GM12878 (cell line): ENCODE measurements at regions of chr5 and their contacts with region 1.

Region 1: DNA sequence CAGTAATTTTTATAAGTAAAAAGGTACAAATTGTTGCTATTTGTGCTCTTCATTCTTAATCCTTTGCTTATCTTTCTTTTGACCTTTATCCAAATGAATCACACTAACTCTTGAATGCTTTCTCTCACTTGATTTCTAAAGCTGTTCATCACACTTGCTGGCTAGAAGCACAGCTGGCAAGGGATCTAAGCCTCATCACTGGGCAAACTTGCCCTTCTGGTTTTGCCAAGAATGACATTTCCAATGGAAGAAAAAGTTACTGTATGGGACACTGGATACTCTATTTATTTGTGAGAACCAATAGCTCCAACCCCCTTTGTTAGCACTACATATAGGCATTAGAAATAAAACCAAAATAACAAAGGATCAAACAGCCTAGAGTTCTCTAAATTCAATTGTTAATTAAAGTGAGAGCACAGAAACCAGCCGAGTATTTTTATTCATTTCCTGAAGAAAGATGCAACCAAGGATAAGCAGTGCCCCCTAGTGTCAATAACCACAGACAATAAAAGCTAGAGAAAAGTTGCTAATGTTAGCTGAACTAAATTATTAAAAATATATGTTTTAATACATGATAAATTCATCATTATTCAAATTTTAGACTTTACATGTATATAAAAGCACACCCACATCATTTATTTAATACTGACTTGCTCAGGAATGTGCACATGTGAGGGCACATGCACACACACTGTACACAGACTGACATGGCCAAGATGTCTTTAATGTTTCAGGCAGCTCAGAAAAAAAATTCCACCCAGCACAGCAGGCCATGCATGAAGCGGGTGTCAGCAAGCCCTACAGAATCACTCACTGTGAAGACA is 59.8 kb upstream of the POU5F2 start:
- DNase-seq: peak; percentile 2
- ATAC-seq: peak; percentile 78
- H3K4me3 ChIP-seq: no peak overlapping the region
- H3K27ac ChIP-seq: no peak overlapping the region
- H3K4me1 ChIP-seq: peaks cover 3% of the 10 kb centered on the region; the same call in 1 of the 2 replicates
- H3K27me3 ChIP-seq: no peaks in the 10 kb centered on the region
- CTCF ChIP-seq: peak; percentile 49 to 68 (median 57)
- EP300 ChIP-seq: no peak
- POLR2A ChIP-seq: no peak
- RAD21 ChIP-seq: peak; percentile 91

Region 2: GRCh38 chr5:93582677-93583438 is 218.3 kb before region 1 on chr5 and contains the start of gene NR2F1:
- CTCF ChIA-PET with region 1: interaction called, 40 read pairs
- POLR2A ChIA-PET with region 1: no interaction called
- RAD21 ChIA-PET with region 1: interaction called, 16 read pairs
- SMC1A ChIA-PET with region 1: interaction called, 26 read pairs
- in situ Hi-C with region 1: no loop called
- intact Hi-C with region 1: loop called (anchors 1 kb)
- DNase-seq: no peak
- ATAC-seq: peak; percentile 54
- H3K4me3 ChIP-seq: peak within 1 kb of the TSS; percentile 16; the same call in 1 of the 2 replicates
- H3K27ac ChIP-seq: no peak within 1 kb of the TSS
- H3K4me1 ChIP-seq: peaks cover 18% of the 10 kb centered on the region
- H3K27me3 ChIP-seq: peaks cover 14 to 45% of the 10 kb centered on the region in 2 experiments
- CTCF ChIP-seq: no peak
- EP300 ChIP-seq: no peak
- POLR2A ChIP-seq: no peak
- RAD21 ChIP-seq: no peak
- polyA plus RNA-seq, gene NR2F1: 0.04 TPM in 1 of 2 experiments, not detected in the other

Region 3: GRCh38 chr5:93607367-93608258 is 193.6 kb before region 1 on chr5:
- CTCF ChIA-PET with region 1: interaction called, 95 read pairs
- POLR2A ChIA-PET with region 1: no interaction called
- RAD21 ChIA-PET with region 1: interaction called, 41 read pairs
- SMC1A ChIA-PET with region 1: interaction called, 55 read pairs
- in situ Hi-C with region 1: no loop called
- intact Hi-C with region 1: loop called (anchors 1 kb)
- DNase-seq: no peak
- ATAC-seq: peak; percentile 93
- H3K4me3 ChIP-seq: no peak overlapping the region
- H3K27ac ChIP-seq: no peak overlapping the region
- H3K4me1 ChIP-seq: 0 out of 2 replicates have a peak, but pooled peaks cover 3% of the 10 kb centered on the region
- H3K27me3 ChIP-seq: peaks cover 3 to 39% of the 10 kb centered on the region in 2 experiments
- CTCF ChIP-seq: peak; percentile 54 to 70 (median 69)
- EP300 ChIP-seq: no peak
- POLR2A ChIP-seq: no peak
- RAD21 ChIP-seq: peak; percentile 83

Region 4: GRCh38 chr5:93691997-93692396 is 109.2 kb before region 1 on chr5:
- CTCF ChIA-PET with region 1: no interaction called
- POLR2A ChIA-PET with region 1: no interaction called
- RAD21 ChIA-PET with region 1: no interaction called
- SMC1A ChIA-PET with region 1: no interaction called
- in situ Hi-C with region 1: no loop called
- intact Hi-C with region 1: no loop called
- DNase-seq: no peak
- ATAC-seq: no peak
- H3K4me3 ChIP-seq: no peak overlapping the region
- H3K27ac ChIP-seq: no peak overlapping the region
- H3K4me1 ChIP-seq: no peaks in the 10 kb centered on the region
- H3K27me3 ChIP-seq: no peaks in the 10 kb centered on the region
- CTCF ChIP-seq: no peak
- EP300 ChIP-seq: no peak
- POLR2A ChIP-seq: no peak
- RAD21 ChIP-seq: no peak

Region 5: DNA sequence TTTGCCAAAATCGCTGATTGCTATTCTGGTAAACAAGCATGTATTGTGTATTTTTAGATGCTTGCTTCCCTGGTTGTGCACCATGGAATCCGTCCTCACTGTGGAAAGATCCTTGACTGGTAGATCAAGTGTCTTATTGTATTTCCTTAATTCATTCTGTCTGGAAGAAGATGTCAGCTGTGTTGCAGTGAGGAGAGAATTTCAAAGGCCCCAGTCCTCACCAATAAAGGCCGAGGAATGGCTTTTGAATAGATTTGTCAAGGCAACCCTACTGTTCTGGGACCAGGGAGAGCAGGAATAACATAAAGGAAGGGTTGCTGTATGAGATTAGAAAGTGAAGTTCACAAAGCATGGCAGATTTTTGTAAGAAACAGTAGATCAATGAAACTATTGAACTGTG is 23.6 kb before region 1 on chr5:
- CTCF ChIA-PET with region 1: interaction called, 15 read pairs
- POLR2A ChIA-PET with region 1: no interaction called
- RAD21 ChIA-PET with region 1: interaction called, 6 read pairs
- SMC1A ChIA-PET with region 1: interaction called, 10 read pairs
- in situ Hi-C with region 1: no loop called
- intact Hi-C with region 1: no loop called
- DNase-seq: no peak
- ATAC-seq: no peak
- H3K4me3 ChIP-seq: no peak overlapping the region
- H3K27ac ChIP-seq: no peak overlapping the region
- H3K4me1 ChIP-seq: no peaks in the 10 kb centered on the region
- H3K27me3 ChIP-seq: no peaks in the 10 kb centered on the region
- CTCF ChIP-seq: no peak
- EP300 ChIP-seq: no peak
- POLR2A ChIP-seq: no peak
- RAD21 ChIP-seq: no peak

Region 6: GRCh38 chr5:93789173-93790070 is 11.8 kb before region 1 on chr5:
- CTCF ChIA-PET with region 1: interaction called, 24 read pairs
- POLR2A ChIA-PET with region 1: no interaction called
- RAD21 ChIA-PET with region 1: interaction called, 5 read pairs
- SMC1A ChIA-PET with region 1: interaction called, 9 read pairs
- in situ Hi-C with region 1: no loop called
- intact Hi-C with region 1: no loop called
- DNase-seq: no peak
- ATAC-seq: no peak
- H3K4me3 ChIP-seq: no peak overlapping the region
- H3K27ac ChIP-seq: no peak overlapping the region
- H3K4me1 ChIP-seq: no peaks in the 10 kb centered on the region
- H3K27me3 ChIP-seq: no peaks in the 10 kb centered on the region
- CTCF ChIP-seq: no peak
- EP300 ChIP-seq: no peak
- POLR2A ChIP-seq: no peak
- RAD21 ChIP-seq: no peak

Region 7: GRCh38 chr5:93899026-93899600 is 97.9 kb after region 1 on chr5:
- CTCF ChIA-PET with region 1: interaction called, 8 read pairs
- POLR2A ChIA-PET with region 1: no interaction called
- RAD21 ChIA-PET with region 1: interaction called, 4 read pairs
- SMC1A ChIA-PET with region 1: interaction called, 10 read pairs
- in situ Hi-C with region 1: no loop called
- intact Hi-C with region 1: no loop called
- DNase-seq: no peak
- ATAC-seq: peak; percentile 81
- H3K4me3 ChIP-seq: no peak overlapping the region
- H3K27ac ChIP-seq: no peak overlapping the region
- H3K4me1 ChIP-seq: no peaks in the 10 kb centered on the region
- H3K27me3 ChIP-seq: no peaks in the 10 kb centered on the region
- CTCF ChIP-seq: peak; percentile 34 to 46 (median 40); a peak in 4 of 6 replicates
- EP300 ChIP-seq: no peak
- POLR2A ChIP-seq: no peak
- RAD21 ChIP-seq: peak; percentile 32; the same call in 1 of the 2 replicates